Mucosa of descending colon (tissue), 3 donors: ENCODE measurements at regions of chr6 and their contacts with region 1.

Region 1: DNA sequence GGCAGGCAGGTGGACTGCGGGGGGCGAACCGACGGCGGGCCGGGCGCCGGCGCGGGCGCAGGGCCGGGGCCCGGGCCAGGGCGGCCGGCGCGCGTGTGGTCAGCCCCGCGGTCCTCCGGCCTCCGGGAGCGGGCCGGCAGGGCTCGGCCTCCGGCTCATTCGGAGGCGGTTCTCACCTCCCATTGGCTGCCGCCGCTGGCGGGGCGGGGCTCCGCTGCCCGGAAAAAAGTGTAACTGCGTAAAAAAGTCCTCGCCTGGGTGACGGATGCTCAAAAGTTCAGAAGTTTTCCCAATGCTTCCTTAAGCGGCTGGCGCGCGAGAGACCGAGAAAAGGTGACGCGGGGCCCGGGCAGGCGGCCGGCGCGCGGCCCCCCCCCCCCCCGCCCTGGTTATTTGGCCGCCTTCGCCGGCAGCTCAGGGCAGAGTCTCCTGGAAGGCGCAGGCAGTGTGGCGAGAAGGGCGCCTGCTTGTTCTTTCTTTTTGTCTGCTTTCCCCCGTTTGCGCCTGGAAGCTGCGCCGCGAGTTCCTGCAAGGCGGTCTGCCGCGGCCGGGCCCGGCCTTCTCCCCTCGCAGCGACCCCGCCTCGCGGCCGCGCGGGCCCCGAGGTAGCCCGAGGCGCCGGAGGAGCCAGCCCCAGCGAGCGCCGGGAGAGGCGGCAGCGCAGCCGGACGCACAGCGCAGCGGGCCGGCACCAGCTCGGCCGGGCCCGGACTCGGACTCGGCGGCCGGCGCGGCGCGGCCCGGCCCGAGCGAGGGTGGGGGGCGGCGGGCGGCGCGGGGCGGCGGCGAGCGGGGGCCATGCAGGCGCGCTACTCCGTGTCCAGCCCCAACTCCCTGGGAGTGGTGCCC is at the start of gene FOXC1:
- DNase-seq: peak; percentile 85 to 88 (median 86)
- ATAC-seq: peak; percentile 82
- H3K4me3 ChIP-seq: no peak within 1 kb of the TSS
- H3K4me1 ChIP-seq: peaks cover 47% of the 10 kb centered on the region
- CTCF ChIP-seq: no peak
- total RNA-seq, gene FOXC1: 1.1 to 1.7 (median 1.6) TPM

Region 2: DNA sequence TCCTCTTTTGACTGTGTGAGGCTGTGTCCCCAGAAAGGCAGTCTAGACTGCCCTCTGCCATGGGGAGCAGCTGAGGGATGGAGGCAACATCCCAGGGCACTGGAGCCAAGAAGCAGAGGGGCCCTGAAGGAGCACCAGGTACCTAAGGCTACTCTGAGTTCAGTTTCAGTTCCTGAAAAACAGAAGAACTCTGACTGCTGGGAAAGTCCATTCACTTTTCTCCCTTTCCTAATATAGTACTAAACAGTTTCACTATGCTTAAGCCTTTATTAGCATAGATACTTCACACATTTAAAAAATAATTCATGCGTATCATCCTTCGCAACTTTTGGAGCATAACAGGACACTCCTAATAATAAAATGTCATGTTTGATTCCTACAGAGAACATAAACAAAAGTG is 129.8 kb after region 1 on chr6:
- intact Hi-C with region 1: no loop called
- DNase-seq: no peak
- ATAC-seq: peak; percentile 9
- H3K4me3 ChIP-seq: no peak overlapping the region
- H3K4me1 ChIP-seq: no peaks in the 10 kb centered on the region
- CTCF ChIP-seq: no peak

Region 3: DNA sequence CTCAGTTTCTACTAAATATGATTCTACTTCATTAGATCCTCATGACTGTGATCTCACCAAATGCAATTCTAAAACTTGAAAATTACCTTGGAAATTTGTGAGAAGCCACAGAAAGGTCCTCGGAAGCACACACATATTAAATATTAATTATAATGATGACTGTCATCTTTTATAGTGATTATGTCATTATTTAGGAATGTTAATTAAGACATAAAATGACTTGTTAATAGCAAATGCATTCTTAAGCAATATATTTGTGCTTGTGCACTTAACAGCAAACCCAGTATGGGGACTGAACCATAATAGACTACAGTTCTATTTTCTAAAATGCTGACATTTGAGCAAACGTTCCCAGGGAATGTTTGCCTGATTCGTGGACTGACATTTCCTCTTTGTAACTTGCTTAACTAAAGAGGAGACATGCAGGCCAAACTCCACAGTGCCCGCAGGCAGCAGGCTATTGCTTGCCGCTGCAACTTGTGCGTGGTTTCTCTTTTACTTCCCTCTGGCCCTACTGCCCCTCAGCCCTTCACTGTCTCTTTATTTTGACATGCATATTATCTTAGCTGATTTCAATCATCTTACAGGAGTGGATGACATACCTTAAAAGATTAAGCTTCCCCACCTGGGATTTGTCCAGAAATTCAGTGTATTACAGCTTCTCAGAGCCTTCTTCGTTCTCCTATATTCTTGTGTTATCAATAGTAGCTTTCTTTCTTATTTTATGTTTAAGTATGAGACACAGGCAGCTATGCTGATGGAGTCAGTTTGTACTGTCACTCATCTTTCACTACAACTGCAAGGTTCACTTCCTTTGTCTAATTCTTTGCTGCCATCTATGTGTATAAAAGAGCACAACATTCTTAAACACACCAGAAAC is 494.0 kb after region 1 on chr6:
- intact Hi-C with region 1: loop called in 1 of 2 experiments (anchors 10 kb)
- DNase-seq: no peak
- ATAC-seq: peak; percentile 61
- H3K4me3 ChIP-seq: no peak overlapping the region
- H3K4me1 ChIP-seq: no peaks in the 10 kb centered on the region
- CTCF ChIP-seq: no peak

Region 4: DNA sequence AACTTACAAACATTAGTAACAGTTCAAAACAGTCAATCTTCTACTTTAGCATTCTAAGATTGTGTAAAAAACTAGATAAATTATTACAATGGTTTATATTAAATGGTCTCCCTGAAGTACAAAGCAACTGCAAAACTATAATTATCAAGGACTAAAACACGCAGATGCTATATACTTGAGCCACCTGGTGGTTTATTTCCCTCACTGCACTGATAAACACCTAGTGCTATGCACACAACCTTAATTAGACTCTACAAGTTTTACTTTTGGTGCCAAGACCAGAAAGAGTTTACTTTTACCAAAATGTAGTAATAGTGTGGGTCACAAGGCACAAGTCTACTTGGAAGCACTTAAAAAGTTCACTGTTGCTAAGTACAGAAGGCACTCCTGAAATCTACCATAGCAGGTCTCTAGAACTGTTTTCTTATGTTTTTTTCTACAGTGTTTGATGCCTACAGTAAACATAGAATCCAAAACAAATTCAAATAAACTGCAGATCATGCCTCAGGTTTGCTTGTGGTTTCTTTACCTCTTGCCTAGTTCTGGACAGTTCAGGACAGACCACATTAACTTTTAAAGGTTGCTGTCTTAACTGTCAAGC is 586.3 kb after region 1 on chr6:
- intact Hi-C with region 1: loop called in 1 of 2 experiments (anchors 10 kb)
- DNase-seq: peak in 1 of 3 donors; percentile 85
- ATAC-seq: peak; percentile 84
- H3K4me3 ChIP-seq: no peak overlapping the region
- H3K4me1 ChIP-seq: peaks cover 15% of the 10 kb centered on the region
- CTCF ChIP-seq: peak; percentile 61

Region 5: GRCh38 chr6:2353412-2354137 is 743.7 kb after region 1 on chr6:
- intact Hi-C with region 1: loop called in 1 of 2 experiments (anchors 10 kb)
- DNase-seq: peak in 2 of 3 donors; percentile 63 to 88
- ATAC-seq: peak; percentile 81
- H3K4me3 ChIP-seq: no peak overlapping the region
- H3K4me1 ChIP-seq: no peaks in the 10 kb centered on the region
- CTCF ChIP-seq: peak; percentile 51

Region 6: GRCh38 chr6:2634139-2634964 is 1024.5 kb after region 1 on chr6:
- intact Hi-C with region 1: loop called in 1 of 2 experiments (anchors 10 kb)
- DNase-seq: peak; percentile 85 to 89 (median 89)
- ATAC-seq: peak; percentile 99
- H3K4me3 ChIP-seq: no peak overlapping the region
- H3K4me1 ChIP-seq: peaks cover 6% of the 10 kb centered on the region
- CTCF ChIP-seq: peak; percentile 93